ENCODE measurements at regions of chr2 and their contacts with region 1.

Region 1: GRCh38 chr2:29063646-29064343 is 10.5 kb downstream of the PCARE start:
- DNase-seq: peak; percentile 47
- H3K4me3 Mint-ChIP-seq: peak overlapping the region; percentile 55
- H3K27ac Mint-ChIP-seq: peak overlapping the region; percentile 54
- H3K4me1 Mint-ChIP-seq: peaks cover 49% of the 10 kb centered on the region
- H3K27me3 Mint-ChIP-seq: no peaks in the 10 kb centered on the region
- CTCF ChIP-seq: no peak

Region 2: DNA sequence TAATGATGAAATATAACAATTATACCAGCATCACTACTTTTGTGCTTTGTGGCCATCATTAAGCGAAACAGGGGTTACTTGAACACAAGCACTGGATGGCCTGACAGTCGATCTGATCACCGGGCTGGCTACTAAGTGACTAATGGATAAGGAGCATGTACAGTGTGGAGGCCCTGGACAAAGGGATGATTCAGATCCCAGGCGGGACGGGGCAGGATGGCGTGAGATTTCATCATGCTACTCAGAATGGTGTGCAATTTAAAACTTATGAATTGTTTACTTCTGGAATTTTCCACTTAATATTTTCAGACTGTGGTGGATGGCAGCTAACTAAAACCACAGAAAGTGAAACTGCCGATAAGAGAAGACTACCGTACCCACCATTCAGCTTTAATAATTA is 44.4 kb after region 1 on chr2:
- CTCF ChIA-PET with region 1: interaction called, 8 read pairs
- POLR2A ChIA-PET with region 1: interaction called, 230 read pairs
- intact Hi-C with region 1: no loop called
- DNase-seq: peak; percentile 95
- H3K4me3 Mint-ChIP-seq: peak overlapping the region; percentile 39
- H3K27ac Mint-ChIP-seq: peak overlapping the region; percentile 81
- H3K4me1 Mint-ChIP-seq: peaks cover 28% of the 10 kb centered on the region
- H3K27me3 Mint-ChIP-seq: no peaks in the 10 kb centered on the region
- CTCF ChIP-seq: no peak

Region 3: GRCh38 chr2:29115797-29116781 is 52.3 kb after region 1 on chr2:
- CTCF ChIA-PET with region 1: interaction called, 9 read pairs
- POLR2A ChIA-PET with region 1: interaction called, 230 read pairs
- intact Hi-C with region 1: loop called (anchors 5 kb)
- DNase-seq: peak; percentile 87
- H3K4me3 Mint-ChIP-seq: peak overlapping the region; percentile 90
- H3K27ac Mint-ChIP-seq: peak overlapping the region; percentile 49
- H3K4me1 Mint-ChIP-seq: peaks cover 40% of the 10 kb centered on the region
- H3K27me3 Mint-ChIP-seq: no peaks in the 10 kb centered on the region
- CTCF ChIP-seq: no peak

Region 4: GRCh38 chr2:29123617-29124349 is 60.0 kb after region 1 on chr2:
- CTCF ChIA-PET with region 1: interaction called, 9 read pairs
- POLR2A ChIA-PET with region 1: interaction called, 230 read pairs
- intact Hi-C with region 1: loop called (anchors 5 kb)
- DNase-seq: peak; percentile 87
- H3K4me3 Mint-ChIP-seq: peak overlapping the region; percentile 47
- H3K27ac Mint-ChIP-seq: peak overlapping the region; percentile 98
- H3K4me1 Mint-ChIP-seq: peaks cover 43% of the 10 kb centered on the region
- H3K27me3 Mint-ChIP-seq: no peaks in the 10 kb centered on the region
- CTCF ChIP-seq: no peak

Region 5: GRCh38 chr2:29130295-29130694 is 66.5 kb after region 1 on chr2:
- CTCF ChIA-PET with region 1: interaction called, 9 read pairs
- POLR2A ChIA-PET with region 1: interaction called, 81 read pairs
- intact Hi-C with region 1: no loop called
- DNase-seq: peak; percentile 93
- H3K4me3 Mint-ChIP-seq: peak overlapping the region; percentile 46
- H3K27ac Mint-ChIP-seq: peak overlapping the region; percentile 63
- H3K4me1 Mint-ChIP-seq: peaks cover 25% of the 10 kb centered on the region
- H3K27me3 Mint-ChIP-seq: no peaks in the 10 kb centered on the region
- CTCF ChIP-seq: no peak

Region 6: DNA sequence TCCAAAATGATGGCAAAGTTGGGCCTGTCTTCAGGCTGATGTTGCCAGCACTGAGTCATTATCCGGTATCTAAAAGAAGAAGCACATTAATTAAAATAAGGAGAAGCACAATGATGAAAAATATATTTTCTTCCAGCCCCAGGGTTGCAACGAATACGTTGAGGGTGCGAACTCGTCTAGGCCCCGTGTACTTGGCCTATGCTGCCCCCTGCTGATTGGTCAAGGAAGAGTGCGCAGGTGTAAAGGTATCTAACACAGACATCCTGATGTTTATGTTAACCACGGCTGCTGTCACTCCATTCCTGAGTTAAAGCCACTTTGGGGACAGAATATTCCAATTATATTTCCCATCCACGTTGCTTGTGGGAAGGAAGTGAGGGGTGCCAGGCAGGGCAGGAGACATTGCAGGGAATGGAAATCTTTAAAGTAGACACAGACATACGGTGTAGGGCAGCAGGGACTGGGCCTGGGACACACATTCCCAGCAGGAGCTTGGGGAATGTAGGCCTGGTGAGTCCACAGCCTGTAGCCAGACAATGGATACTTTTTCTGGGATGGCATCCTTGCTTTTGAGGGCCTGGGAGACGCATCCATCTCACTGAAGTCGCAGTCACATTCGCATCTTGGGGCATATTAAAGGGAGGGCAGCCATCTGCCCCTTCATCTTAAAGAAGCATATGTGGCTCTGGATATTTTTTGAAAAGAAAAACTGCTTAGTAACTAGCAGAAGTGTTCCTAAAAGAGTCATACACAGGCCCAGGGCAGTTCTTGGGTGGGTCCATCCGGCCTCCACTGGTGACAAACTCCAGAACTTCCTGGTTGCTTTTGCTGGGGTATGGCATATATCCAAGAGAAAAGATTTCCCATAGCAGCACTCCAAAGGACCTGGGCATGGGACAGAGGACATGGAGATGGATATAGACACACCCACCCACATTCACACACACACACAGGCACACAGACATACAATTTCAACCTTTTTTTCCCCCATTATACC is 133.3 kb after region 1 on chr2:
- CTCF ChIA-PET with region 1: interaction called, 4 read pairs
- POLR2A ChIA-PET with region 1: interaction called, 3 read pairs
- intact Hi-C with region 1: loop called (anchors 5 kb)
- DNase-seq: peak; percentile 77
- H3K4me3 Mint-ChIP-seq: no peak overlapping the region
- H3K27ac Mint-ChIP-seq: no peak overlapping the region
- H3K4me1 Mint-ChIP-seq: peaks cover 11% of the 10 kb centered on the region
- H3K27me3 Mint-ChIP-seq: no peaks in the 10 kb centered on the region
- CTCF ChIP-seq: peak; percentile 84

Region 7: GRCh38 chr2:29463181-29463900 is 399.5 kb after region 1 on chr2:
- CTCF ChIA-PET with region 1: no interaction called
- POLR2A ChIA-PET with region 1: no interaction called
- intact Hi-C with region 1: loop called (anchors 5 kb)
- DNase-seq: peak; percentile 46
- H3K4me3 Mint-ChIP-seq: peak overlapping the region; percentile 53
- H3K27ac Mint-ChIP-seq: peak overlapping the region; percentile 92
- H3K4me1 Mint-ChIP-seq: peaks cover 26% of the 10 kb centered on the region
- H3K27me3 Mint-ChIP-seq: no peaks in the 10 kb centered on the region
- CTCF ChIP-seq: no peak

Measured in MCF 10A (cell line).